Activated T-helper 2 cell treated with anti-CD3 and anti-CD28 coated beads, Interferon-gamma antibody, Interleukin-2, Interleukin-4, amounts not matched to agents 10 μg/mL and 5 μg/mL and 100 μg/mL, durations not matched to agents 14 hours and 24 hours and 36 hours (primary cell): ENCODE measurements at regions of chr15 and their contacts with region 1.

Region 1: DNA sequence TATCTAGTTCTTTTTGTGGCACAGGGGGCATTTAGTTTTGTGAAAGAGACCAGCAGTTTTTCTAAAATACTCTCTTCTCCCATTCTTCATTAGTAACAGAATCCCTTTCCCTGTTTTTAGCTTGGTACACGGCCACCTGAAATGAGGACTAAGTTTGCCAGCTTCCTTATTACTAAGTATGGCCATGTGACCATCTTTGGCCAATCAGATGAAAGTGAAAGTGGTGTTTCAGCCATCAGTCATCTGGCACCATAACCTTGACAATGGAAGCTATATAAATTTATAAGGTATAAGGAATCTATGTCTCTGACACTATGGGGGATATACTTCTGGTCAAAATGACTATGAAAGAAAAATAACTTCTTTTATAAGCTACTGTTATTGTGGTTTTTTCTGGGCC is 570.4 kb downstream of the AGBL1 start:
- DNase-seq: no peak
- H3K4me3 Mint-ChIP-seq: peak overlapping the region; percentile 24
- H3K27ac Mint-ChIP-seq: peak overlapping the region; percentile 83
- H3K4me1 Mint-ChIP-seq: peaks cover 61% of the 10 kb centered on the region
- H3K27me3 Mint-ChIP-seq: no peaks in the 10 kb centered on the region

Region 2: DNA sequence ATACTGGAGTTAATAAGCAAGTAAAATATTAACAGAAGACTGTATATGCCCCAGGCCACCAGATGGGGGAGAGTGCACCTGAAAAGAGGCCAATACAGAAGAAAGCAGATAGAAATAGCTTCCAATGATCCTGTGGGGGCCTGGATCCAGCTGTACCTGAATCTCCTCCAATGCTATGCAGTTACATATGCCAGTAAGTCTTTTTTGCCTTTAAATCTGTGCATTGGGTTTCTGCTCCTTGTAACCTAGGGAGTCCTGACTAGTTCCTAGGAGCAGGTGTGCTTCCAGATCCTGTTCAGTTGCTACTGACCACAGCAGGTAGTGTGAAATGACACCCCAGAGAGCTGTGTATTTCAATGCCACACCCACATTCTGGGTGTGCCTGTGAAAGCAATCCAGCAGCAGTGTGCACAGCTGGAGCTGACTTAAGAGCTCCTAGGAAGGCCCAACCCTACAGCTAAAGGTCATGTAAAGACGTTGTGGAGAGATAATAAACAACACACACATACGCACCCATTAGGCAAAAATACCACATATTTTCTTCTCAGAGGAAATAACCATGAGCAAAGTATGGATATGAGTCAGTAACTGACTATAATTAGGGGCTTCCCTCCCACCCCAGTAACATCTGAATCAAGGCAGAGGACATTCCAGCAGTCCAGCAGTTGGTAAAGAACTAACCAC is 1331.9 kb before region 1 on chr15:
- intact Hi-C with region 1: loop called (anchors 5 kb)
- DNase-seq: peak; percentile 55
- H3K4me3 Mint-ChIP-seq: peak overlapping the region; percentile 41
- H3K27ac Mint-ChIP-seq: peak overlapping the region; percentile 91
- H3K4me1 Mint-ChIP-seq: peaks cover 66% of the 10 kb centered on the region
- H3K27me3 Mint-ChIP-seq: no peaks in the 10 kb centered on the region

Region 3: DNA sequence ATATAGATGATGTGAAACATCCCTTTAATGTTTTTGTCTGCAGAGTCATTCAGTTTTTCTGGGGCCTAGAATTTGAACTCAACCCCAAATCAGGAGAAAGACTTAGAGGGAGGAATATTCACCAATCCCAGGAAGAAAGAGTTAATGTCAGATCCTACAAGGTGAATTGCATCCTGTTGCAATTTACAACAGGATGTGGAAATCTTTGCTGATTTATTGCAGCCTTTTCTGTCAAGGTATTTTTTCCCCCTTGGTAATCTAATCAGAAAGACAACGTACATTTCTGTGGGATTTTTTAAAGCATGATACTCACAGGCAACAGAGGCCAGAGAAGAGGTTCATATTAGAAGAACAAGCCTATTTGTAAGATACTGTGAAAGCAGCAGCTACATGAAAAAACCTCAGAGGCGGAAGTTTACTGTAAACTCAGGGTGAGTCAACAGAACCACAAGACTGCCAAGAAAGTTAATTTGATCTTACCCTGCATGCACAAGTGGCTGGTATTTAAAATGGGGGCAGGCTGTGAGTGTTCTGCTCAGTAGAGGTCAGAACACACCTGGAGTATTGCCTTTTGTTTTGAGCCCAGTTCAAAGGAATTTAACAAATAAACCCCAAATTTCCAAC is 38.6 kb before region 1 on chr15:
- intact Hi-C with region 1: loop called (anchors 1 kb)
- DNase-seq: peak; percentile 37
- H3K4me3 Mint-ChIP-seq: peak overlapping the region; percentile 33
- H3K27ac Mint-ChIP-seq: peak overlapping the region; percentile 84
- H3K4me1 Mint-ChIP-seq: peaks cover 63% of the 10 kb centered on the region
- H3K27me3 Mint-ChIP-seq: no peaks in the 10 kb centered on the region

Region 4: GRCh38 chr15:86677278-86677677 is 27.2 kb after region 1 on chr15:
- intact Hi-C with region 1: no loop called
- DNase-seq: no peak
- H3K4me3 Mint-ChIP-seq: peak overlapping the region; percentile 18
- H3K27ac Mint-ChIP-seq: peak overlapping the region; percentile 13
- H3K4me1 Mint-ChIP-seq: peaks cover 15% of the 10 kb centered on the region
- H3K27me3 Mint-ChIP-seq: no peaks in the 10 kb centered on the region

Region 5: GRCh38 chr15:86691091-86691663 is 41.1 kb after region 1 on chr15:
- intact Hi-C with region 1: loop called (anchors 1 kb)
- DNase-seq: no peak
- H3K4me3 Mint-ChIP-seq: no peak overlapping the region
- H3K27ac Mint-ChIP-seq: no peak overlapping the region
- H3K4me1 Mint-ChIP-seq: peaks cover 6% of the 10 kb centered on the region
- H3K27me3 Mint-ChIP-seq: no peaks in the 10 kb centered on the region

Region 6: GRCh38 chr15:86743283-86743903 is 93.3 kb after region 1 on chr15:
- intact Hi-C with region 1: loop called (anchors 1 kb)
- DNase-seq: peak; percentile 38
- H3K4me3 Mint-ChIP-seq: no peak overlapping the region
- H3K27ac Mint-ChIP-seq: no peak overlapping the region
- H3K4me1 Mint-ChIP-seq: peaks cover 15% of the 10 kb centered on the region
- H3K27me3 Mint-ChIP-seq: no peaks in the 10 kb centered on the region

Region 7: GRCh38 chr15:88467073-88467934 is 1817.2 kb after region 1 on chr15 and contains the starts of genes MRPL46 and MRPS11:
- intact Hi-C with region 1: loop called (anchors 5 kb)
- DNase-seq: peak; percentile 86
- H3K4me3 Mint-ChIP-seq: peak within 1 kb of the TSS; percentile 96
- H3K27ac Mint-ChIP-seq: peak within 1 kb of the TSS; percentile 94
- H3K4me1 Mint-ChIP-seq: peaks cover 26% of the 10 kb centered on the region
- H3K27me3 Mint-ChIP-seq: no peaks in the 10 kb centered on the region
- total RNA-seq, gene MRPL46: 39.8 and 42.4 TPM in 2 replicates
- total RNA-seq, gene MRPS11: 69.5 and 71.0 TPM in 2 replicates